Cardiac septum (tissue), 1 donor: ENCODE measurements at regions of chr20 and their contacts with region 1.

Region 1: DNA sequence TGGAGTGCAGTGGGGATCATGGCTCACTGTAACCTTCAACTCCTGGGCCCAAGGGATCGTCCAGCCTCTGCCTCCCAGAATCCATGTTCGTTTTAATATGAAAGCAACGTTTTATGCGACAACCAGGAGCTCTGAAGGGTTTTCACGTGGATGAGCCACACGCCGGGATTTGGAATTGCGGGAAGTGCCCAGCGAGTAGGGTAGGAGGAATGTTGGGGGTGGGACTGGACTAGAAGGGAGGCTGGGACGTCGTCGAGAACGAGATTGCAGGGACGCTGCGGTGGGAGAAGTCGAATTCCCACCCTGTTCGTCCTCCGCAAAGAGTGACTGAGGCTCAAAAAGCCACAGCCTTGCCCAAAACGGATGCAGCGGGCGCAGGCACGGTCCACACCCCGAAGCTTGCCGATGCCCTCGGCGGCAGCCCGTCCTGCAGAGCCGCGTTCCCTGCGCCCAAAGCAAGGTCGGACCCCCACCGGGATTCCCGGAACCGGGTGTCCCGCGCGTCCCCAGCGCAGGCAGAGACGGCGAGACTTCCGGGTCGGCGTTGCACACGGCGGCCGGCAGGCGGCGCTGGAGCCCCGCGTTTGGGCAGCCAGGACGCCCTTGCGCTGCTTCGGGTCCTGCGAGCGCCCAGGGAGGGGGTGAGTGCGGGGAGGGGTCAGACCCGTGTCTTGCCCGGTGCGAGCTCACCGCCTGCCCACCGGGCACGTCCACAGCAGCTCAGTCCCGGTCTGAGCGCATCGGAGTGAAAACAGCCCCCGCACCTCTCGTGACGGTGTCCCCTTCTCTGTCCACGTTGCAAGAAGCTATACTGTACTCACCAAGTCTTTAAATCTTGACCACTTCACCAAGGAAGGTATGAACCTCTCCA is 87.8 kb downstream of the DHX35 start:
- DNase-seq: peak; percentile 93

Region 2: GRCh38 chr20:38926142-38926933 is 123.6 kb before region 1 on chr20 and contains the start of gene FAM83D:
- intact Hi-C with region 1: loop called (anchors 2 kb)
- DNase-seq: peak; percentile 96
- total RNA-seq, gene FAM83D: 0.62 TPM

Region 3: GRCh38 chr20:38962044-38962927 is 87.6 kb before region 1 on chr20 and contains the start of gene DHX35:
- intact Hi-C with region 1: loop called (anchors 1 kb)
- DNase-seq: peak; percentile 99
- total RNA-seq, gene DHX35: 11.4 TPM

Region 4: GRCh38 chr20:39081255-39081654 is 31.3 kb after region 1 on chr20:
- intact Hi-C with region 1: loop called (anchors 2 kb)
- DNase-seq: peak; percentile 80